CD8-positive, alpha-beta memory T cell (primary cell): ENCODE measurements at regions of chrX and their contacts with region 1.

Region 1: DNA sequence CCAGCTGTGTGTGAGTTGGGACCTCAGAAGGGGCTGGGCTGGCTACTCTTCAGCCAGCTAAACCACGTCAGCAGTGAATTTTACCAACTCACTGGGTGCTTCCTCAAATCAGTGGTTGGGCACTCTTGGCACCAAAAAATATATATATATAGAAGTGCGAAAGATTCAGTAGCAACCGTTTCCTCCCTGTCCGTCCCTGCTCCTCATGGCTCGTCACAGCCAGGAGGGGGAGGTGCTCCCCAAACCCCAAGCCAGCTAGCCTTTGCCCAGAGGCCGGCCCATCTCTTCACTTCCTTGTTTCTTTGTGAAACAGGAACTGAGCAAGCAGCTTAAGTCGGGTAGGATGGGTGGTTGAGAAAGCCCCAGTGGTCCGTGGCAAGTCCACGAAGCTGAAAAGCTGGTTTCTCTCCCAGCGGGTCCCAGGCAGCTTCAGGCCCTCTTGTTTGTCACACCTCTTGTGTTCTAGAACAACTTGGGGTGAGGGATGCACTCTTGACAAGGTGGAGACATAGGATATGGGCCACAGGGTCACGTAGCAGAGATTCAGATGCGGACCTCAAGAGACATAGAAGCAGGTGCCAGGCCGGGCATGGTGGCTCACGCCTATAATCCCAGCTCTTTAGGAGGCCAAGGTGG is 6.8 kb upstream of the SASH3 start:
- DNase-seq: peak in 3 of 5 donors; percentile 44 to 61 (median 53)
- H3K4me3 ChIP-seq: no peak overlapping the region
- H3K4me3 Mint-ChIP-seq: peak overlapping the region; percentile 19 to 87 (median 69)
- H3K27ac ChIP-seq: no peak overlapping the region
- H3K27ac Mint-ChIP-seq: peak overlapping the region; percentile 86 to 98 (median 94)
- H3K4me1 ChIP-seq: peaks cover 87% of the 10 kb centered on the region
- H3K4me1 Mint-ChIP-seq: peaks cover 79 to 96% (median 86%) of the 10 kb centered on the region in 3 donors
- H3K27me3 ChIP-seq: no peaks in the 10 kb centered on the region
- H3K27me3 Mint-ChIP-seq: no peaks in the 10 kb centered on the region

Region 2: DNA sequence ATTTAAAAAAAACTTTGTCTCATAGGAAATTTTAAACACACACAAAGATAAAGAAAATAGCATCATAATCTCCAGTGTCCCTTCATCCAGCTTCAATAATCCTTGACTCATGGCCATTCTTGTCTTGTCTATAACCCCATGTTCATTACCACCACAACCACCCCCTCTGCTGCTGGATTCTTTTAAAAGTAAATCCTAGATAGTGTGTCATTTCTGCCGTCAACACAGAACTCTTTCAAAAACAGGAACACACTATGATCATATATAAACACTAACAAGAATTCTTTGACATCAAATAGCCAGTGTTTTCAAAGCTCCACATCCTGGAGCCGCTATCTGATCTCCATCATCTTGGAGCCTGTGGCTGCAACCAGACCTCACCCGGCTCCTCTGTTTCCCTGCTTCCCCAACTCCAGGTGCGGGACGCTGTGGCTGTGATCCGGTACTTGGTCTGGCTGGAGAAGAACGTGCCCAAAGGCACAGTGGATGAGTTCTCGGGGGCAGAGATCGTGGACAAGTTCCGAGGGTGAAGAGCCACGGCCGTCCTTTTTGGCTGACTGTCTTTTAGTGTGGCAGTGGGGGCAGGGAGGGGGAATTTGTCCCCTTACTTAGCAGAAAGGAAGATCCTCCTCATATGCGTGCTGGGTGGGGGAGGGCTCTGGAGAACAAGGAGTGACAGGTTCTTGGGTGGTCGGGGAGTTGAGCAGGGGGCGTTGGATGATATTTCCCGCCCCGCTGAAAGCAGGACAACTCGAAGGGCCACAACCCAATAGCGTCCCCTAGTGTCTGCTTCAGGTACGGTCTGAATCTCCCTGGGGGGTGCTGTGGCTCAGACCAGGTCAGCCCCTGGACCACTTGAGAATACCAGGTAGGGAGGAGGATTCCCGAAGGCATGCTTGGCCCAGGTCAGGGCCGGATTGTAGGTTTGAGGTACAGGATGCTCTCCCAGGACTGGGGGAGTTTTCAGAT is 18.6 kb before region 1 on chrX:
- CTCF ChIA-PET with region 1: interaction called, 18 read pairs
- POLR2A ChIA-PET with region 1: interaction called, 27 read pairs
- DNase-seq: no peak
- H3K4me3 ChIP-seq: no peak overlapping the region
- H3K4me3 Mint-ChIP-seq: peak overlapping the region in 2 of 7 donors; percentile 52 to 85
- H3K27ac ChIP-seq: no peak overlapping the region
- H3K27ac Mint-ChIP-seq: peak overlapping the region in 2 of 8 donors; percentile 47 to 88
- H3K4me1 ChIP-seq: peaks cover 49% of the 10 kb centered on the region
- H3K4me1 Mint-ChIP-seq: peaks cover 45 to 59% (median 56%) of the 10 kb centered on the region in 3 donors
- H3K27me3 ChIP-seq: no peaks in the 10 kb centered on the region
- H3K27me3 Mint-ChIP-seq: peaks cover 0 to 3% of the 10 kb centered on the region in 2 donors

Region 3: DNA sequence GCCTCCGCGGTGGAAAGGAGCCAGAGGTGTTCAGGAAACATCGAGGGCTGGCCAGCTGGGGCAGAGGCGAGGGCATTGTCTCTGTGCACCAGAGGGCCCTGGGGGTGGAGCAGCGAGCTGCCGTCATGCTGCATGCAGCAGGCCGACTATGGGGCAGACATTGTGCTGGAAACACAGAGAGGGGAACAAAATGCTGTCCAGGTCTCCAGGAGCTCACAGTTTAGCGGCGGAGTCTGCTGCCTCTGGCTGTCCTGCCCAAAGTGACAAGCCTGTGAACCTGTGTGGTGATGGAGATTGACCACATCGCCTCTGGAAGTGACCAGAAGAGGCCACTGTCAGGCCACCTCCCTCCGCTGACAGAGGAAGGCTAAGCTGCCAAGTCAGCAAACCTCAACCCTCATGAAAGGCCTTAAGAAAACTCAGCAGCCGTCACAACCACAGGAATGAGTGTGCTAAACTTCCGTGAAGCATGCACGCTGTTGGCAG is 13.3 kb before region 1 on chrX:
- CTCF ChIA-PET with region 1: interaction called, 18 read pairs
- POLR2A ChIA-PET with region 1: interaction called, 27 read pairs
- DNase-seq: peak in 3 of 5 donors; percentile 66 to 71 (median 67)
- H3K4me3 ChIP-seq: no peak overlapping the region
- H3K4me3 Mint-ChIP-seq: peak overlapping the region; percentile 30 to 75 (median 49)
- H3K27ac ChIP-seq: peak overlapping the region; percentile 31
- H3K27ac Mint-ChIP-seq: peak overlapping the region; percentile 68 to 95 (median 88)
- H3K4me1 ChIP-seq: peaks cover 72% of the 10 kb centered on the region
- H3K4me1 Mint-ChIP-seq: peaks cover 63 to 79% (median 73%) of the 10 kb centered on the region in 3 donors
- H3K27me3 ChIP-seq: no peaks in the 10 kb centered on the region
- H3K27me3 Mint-ChIP-seq: peaks cover 0 to 4% of the 10 kb centered on the region in 2 donors

Region 4: DNA sequence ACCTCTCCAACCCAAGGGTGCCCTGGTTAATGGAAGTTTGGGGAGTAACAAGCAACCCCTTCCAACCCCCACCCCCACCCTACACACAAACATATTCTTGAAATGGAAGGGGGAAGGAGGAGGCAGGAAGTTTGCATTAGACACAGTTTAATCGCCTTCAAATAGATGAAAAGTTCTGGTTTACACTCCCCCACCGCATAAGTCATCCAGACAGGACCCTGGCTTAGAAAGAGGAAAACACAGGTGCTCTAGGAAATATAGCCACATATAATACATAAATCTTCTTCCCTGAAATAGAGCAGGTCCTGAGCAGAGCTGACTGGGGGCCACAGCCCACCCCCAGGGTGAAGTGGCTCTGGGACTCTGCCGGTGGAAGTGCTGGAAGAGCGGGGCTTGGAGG is 31.9 kb after region 1 on chrX:
- CTCF ChIA-PET with region 1: no interaction called
- POLR2A ChIA-PET with region 1: no interaction called
- DNase-seq: no peak
- H3K4me3 ChIP-seq: no peak overlapping the region
- H3K4me3 Mint-ChIP-seq: no peak overlapping the region
- H3K27ac ChIP-seq: no peak overlapping the region
- H3K27ac Mint-ChIP-seq: peak overlapping the region in 1 of 8 donors; percentile 59
- H3K4me1 ChIP-seq: no peaks in the 10 kb centered on the region
- H3K4me1 Mint-ChIP-seq: peaks cover 10 to 22% (median 21%) of the 10 kb centered on the region in 3 donors
- H3K27me3 ChIP-seq: no peaks in the 10 kb centered on the region
- H3K27me3 Mint-ChIP-seq: peaks cover 0 to 2% of the 10 kb centered on the region in 2 donors